Astrocyte of the cerebellum (primary cell): ENCODE measurements at regions of chr1 and their contacts with region 1.

Region 1: GRCh38 chr1:30823969-30824735 is 66.6 kb upstream of the LAPTM5 start:
- DNase-seq: peak; percentile 99
- H3K4me3 ChIP-seq: peak overlapping the region; percentile 41
- CTCF ChIP-seq: no peak

Region 2: DNA sequence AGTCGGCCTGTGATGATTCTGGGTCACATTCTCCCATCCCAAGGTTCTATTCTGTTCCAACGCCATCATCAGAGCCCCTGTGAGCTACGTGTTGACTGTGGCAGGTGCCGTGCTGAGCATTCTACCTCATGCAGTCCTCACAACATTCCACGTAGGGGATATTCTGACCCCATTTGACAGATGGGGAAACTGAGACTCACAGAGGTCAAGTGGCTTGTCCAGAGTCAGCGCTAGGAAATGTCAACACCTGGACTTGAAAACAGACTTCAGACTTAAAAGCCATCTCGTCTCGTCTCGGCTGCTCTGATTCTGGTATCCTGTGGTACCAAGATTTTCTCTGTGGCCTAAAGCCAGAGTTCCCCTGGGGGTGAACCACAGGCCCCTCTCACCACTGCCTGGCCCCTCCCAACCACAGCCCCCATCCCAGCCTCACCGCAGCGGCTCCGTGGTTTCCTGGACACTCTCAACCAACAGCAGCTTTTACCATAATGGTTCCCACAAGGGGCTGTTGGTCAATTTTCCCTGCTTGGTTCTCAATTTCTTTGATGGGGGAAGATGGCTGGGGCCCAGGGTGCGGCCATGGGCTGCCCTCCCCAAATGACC is 44.8 kb after region 1 on chr1:
- in situ Hi-C with region 1: loop called (anchors 5 kb)
- DNase-seq: no peak
- H3K4me3 ChIP-seq: no peak overlapping the region
- CTCF ChIP-seq: no peak

Region 3: GRCh38 chr1:31155216-31155841 is 331.2 kb after region 1 on chr1:
- in situ Hi-C with region 1: loop called (anchors 25 kb)
- DNase-seq: peak; percentile 16
- H3K4me3 ChIP-seq: peak overlapping the region; percentile 61
- CTCF ChIP-seq: peak; percentile 22